Colonic mucosa (tissue), 4 donors: ENCODE measurements at regions of chr6 and their contacts with region 1.

Region 1: GRCh38 chr6:12605888-12606345 is 110.7 kb upstream of the PHACTR1 start:
- DNase-seq: peak; percentile 68
- H3K4me3 ChIP-seq: no peak overlapping the region
- H3K27ac ChIP-seq: no peak overlapping the region
- H3K4me1 ChIP-seq: no peaks in the 10 kb centered on the region
- H3K27me3 ChIP-seq: no peaks in the 10 kb centered on the region
- CTCF ChIP-seq: peak; percentile 45

Region 2: DNA sequence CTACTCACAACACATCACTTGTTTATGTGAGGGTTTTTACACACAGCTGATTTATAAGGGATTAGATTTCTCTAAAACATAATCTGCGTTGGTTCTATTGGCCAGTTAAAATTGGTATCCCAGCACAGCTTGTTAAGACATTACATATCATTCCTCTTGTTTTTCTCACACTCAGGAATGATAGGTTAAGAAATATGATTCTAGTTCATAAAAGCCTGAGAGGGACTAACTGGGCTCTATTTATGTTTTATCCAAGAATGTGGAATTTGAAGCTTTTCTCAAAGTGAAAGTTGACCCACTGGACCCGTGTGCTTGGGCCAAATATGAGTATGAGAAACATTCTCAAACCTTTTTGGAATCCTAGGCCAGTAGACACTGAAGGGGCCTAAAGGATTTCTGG is 951.0 kb before region 1 on chr6:
- intact Hi-C with region 1: loop called (anchors 5 kb)
- DNase-seq: no peak
- H3K4me3 ChIP-seq: no peak overlapping the region
- H3K27ac ChIP-seq: no peak overlapping the region
- H3K4me1 ChIP-seq: no peaks in the 10 kb centered on the region
- H3K27me3 ChIP-seq: no peaks in the 10 kb centered on the region
- CTCF ChIP-seq: no peak

Region 3: GRCh38 chr6:12150812-12151432 is 455.0 kb before region 1 on chr6:
- intact Hi-C with region 1: loop called (anchors 5 kb)
- DNase-seq: peak; percentile 53
- H3K4me3 ChIP-seq: no peak overlapping the region
- H3K27ac ChIP-seq: peak overlapping the region; percentile 31
- H3K4me1 ChIP-seq: no peaks in the 10 kb centered on the region
- H3K27me3 ChIP-seq: no peaks in the 10 kb centered on the region
- CTCF ChIP-seq: peak; percentile 66

Region 4: DNA sequence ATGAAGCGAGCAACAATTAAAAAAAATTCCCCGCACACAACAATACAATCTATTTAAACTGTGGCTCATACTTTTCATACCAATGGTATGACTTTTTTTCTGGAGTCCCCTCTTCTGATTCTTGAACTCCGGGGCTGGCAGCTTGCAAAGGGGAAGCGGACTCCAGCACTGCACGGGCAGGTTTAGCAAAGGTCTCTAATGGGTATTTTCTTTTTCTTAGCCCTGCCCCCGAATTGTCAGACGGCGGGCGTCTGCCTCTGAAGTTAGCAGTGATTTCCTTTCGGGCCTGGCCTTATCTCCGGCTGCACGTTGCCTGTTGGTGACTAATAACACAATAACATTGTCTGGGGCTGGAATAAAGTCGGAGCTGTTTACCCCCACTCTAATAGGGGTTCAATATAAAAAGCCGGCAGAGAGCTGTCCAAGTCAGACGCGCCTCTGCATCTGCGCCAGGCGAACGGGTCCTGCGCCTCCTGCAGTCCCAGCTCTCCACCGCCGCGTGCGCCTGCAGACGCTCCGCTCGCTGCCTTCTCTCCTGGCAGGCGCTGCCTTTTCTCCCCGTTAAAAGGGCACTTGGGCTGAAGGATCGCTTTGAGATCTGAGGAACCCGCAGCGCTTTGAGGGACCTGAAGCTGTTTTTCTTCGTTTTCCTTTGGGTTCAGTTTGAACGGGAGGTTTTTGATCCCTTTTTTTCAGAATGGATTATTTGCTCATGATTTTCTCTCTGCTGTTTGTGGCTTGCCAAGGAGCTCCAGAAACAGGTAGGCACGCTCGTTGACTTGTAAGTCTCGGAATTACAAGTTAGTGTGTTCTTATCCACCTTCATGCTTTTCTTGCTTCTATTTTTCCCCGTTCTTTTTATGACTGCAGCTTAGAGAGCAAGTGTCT is 315.7 kb before region 1 on chr6 and contains the start of gene EDN1:
- intact Hi-C with region 1: loop called (anchors 2 kb)
- DNase-seq: peak; percentile 83
- H3K4me3 ChIP-seq: peak within 1 kb of the TSS; percentile 43
- H3K27ac ChIP-seq: peak within 1 kb of the TSS; percentile 79
- H3K4me1 ChIP-seq: peaks cover 8% of the 10 kb centered on the region
- H3K27me3 ChIP-seq: no peaks in the 10 kb centered on the region
- CTCF ChIP-seq: peak; percentile 52
- total RNA-seq, gene EDN1: 9.5 to 16.2 TPM

Region 5: GRCh38 chr6:12844290-12845223 is 238.6 kb after region 1 on chr6:
- intact Hi-C with region 1: no loop called
- DNase-seq: no peak
- H3K4me3 ChIP-seq: no peak overlapping the region
- H3K27ac ChIP-seq: no peak overlapping the region
- H3K4me1 ChIP-seq: no peaks in the 10 kb centered on the region
- H3K27me3 ChIP-seq: no peaks in the 10 kb centered on the region
- CTCF ChIP-seq: peak; percentile 32